Caco-2 (cell line): ENCODE measurements at regions of chr19 and their contacts with region 1.

Region 1: GRCh38 chr19:44212250-44212865 is at the start of gene ZNF227:
- DNase-seq: peak; percentile 93 to 95
- H3K4me3 ChIP-seq: peak within 1 kb of the TSS; percentile 64
- H3K4me3 Mint-ChIP-seq: peak within 1 kb of the TSS; percentile 85
- H3K27ac Mint-ChIP-seq: peak within 1 kb of the TSS; percentile 91
- H3K4me1 ChIP-seq: 0 out of 2 replicates have a peak, but pooled peaks cover 6% of the 10 kb centered on the region
- H3K4me1 Mint-ChIP-seq: peaks cover under 1% of the 10 kb centered on the region
- H3K27me3 ChIP-seq: no peaks in the 10 kb centered on the region
- H3K27me3 Mint-ChIP-seq: no peaks in the 10 kb centered on the region
- CTCF ChIP-seq: no peak
- total RNA-seq, gene ZNF227: 25.9 and 27.3 TPM in 2 replicates

Region 2: DNA sequence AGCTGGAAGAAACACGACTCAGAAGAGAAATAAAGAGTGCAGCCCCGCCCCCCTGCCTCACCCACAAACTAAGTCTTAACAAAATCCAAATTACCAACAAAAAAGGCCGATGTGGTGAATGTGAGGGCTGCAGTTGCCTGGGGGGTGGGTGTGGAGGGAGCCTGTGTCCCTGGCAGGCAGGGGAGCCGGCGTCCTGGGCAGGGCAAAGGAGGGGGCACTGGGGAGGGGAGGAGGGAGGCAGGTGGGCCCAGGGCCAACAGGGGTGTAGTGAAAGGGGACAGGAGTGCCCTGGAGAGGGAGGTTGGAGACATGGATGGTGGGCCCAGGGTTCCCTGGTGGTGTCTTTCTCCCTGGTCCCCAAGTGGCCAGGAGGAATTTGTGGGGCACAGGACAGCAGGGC is 492.4 kb before region 1 on chr19:
- CTCF ChIA-PET with region 1: no interaction called
- POLR2A ChIA-PET with region 1: interaction called, 10 read pairs
- intact Hi-C with region 1: no loop called
- DNase-seq: no peak
- H3K4me3 ChIP-seq: no peak overlapping the region
- H3K4me3 Mint-ChIP-seq: no peak overlapping the region
- H3K27ac Mint-ChIP-seq: no peak overlapping the region
- H3K4me1 ChIP-seq: no peaks in the 10 kb centered on the region
- H3K4me1 Mint-ChIP-seq: no peaks in the 10 kb centered on the region
- H3K27me3 ChIP-seq: no peaks in the 10 kb centered on the region
- H3K27me3 Mint-ChIP-seq: no peaks in the 10 kb centered on the region
- CTCF ChIP-seq: no peak

Region 3: DNA sequence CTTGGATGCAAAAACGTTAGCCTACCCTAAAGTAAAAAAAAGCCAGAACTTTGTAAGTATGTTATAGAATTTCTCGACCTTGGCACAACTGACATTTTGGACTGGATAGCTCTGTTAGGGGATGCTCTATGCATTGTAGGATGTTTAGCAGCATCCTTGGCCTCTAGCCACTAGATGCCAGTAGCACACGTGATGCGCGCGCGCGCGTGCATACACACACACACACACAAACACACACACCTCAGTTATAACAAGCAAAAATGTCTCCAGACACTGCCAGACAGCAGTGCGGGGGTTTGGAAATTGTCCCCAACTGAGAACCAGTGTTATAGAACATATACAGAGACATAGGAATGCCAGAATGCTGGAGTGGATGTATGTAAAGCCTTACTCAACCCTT is 30.2 kb before region 1 on chr19:
- CTCF ChIA-PET with region 1: no interaction called
- POLR2A ChIA-PET with region 1: no interaction called
- intact Hi-C with region 1: no loop called
- DNase-seq: peak in 1 of 2 experiments; percentile 8
- H3K4me3 ChIP-seq: no peak overlapping the region
- H3K4me3 Mint-ChIP-seq: no peak overlapping the region
- H3K27ac Mint-ChIP-seq: no peak overlapping the region
- H3K4me1 ChIP-seq: no peaks in the 10 kb centered on the region
- H3K4me1 Mint-ChIP-seq: no peaks in the 10 kb centered on the region
- H3K27me3 ChIP-seq: no peaks in the 10 kb centered on the region
- H3K27me3 Mint-ChIP-seq: peaks cover 6% of the 10 kb centered on the region
- CTCF ChIP-seq: no peak

Region 4: GRCh38 chr19:44258835-44259413 is 46.6 kb after region 1 on chr19:
- CTCF ChIA-PET with region 1: no interaction called
- POLR2A ChIA-PET with region 1: no interaction called
- intact Hi-C with region 1: loop called (anchors 1 kb)
- DNase-seq: no peak
- H3K4me3 ChIP-seq: peak overlapping the region; percentile 71; the same call in 1 of the 2 replicates
- H3K4me3 Mint-ChIP-seq: peak overlapping the region; percentile 88
- H3K27ac Mint-ChIP-seq: no peak overlapping the region
- H3K4me1 ChIP-seq: peaks cover 4% of the 10 kb centered on the region; the same call in 1 of the 2 replicates
- H3K4me1 Mint-ChIP-seq: peaks cover 18% of the 10 kb centered on the region
- H3K27me3 ChIP-seq: no peaks in the 10 kb centered on the region
- H3K27me3 Mint-ChIP-seq: no peaks in the 10 kb centered on the region
- CTCF ChIP-seq: no peak

Region 5: GRCh38 chr19:44304659-44305193 is 92.4 kb after region 1 on chr19 and contains the start of gene ZNF235:
- CTCF ChIA-PET with region 1: interaction called, 7 read pairs
- POLR2A ChIA-PET with region 1: no interaction called
- intact Hi-C with region 1: loop called (anchors 1 kb)
- DNase-seq: peak; percentile 90 to 93
- H3K4me3 ChIP-seq: peak within 1 kb of the TSS; percentile 75
- H3K4me3 Mint-ChIP-seq: peak within 1 kb of the TSS; percentile 84
- H3K27ac Mint-ChIP-seq: peak within 1 kb of the TSS; percentile 60
- H3K4me1 ChIP-seq: peaks cover 6% of the 10 kb centered on the region; the same call in 1 of the 2 replicates
- H3K4me1 Mint-ChIP-seq: no peaks in the 10 kb centered on the region
- H3K27me3 ChIP-seq: no peaks in the 10 kb centered on the region
- H3K27me3 Mint-ChIP-seq: no peaks in the 10 kb centered on the region
- CTCF ChIP-seq: no peak
- total RNA-seq, gene ZNF235: 9.2 and 9.5 TPM in 2 replicates

Region 6: GRCh38 chr19:44500148-44500956 is 288.0 kb after region 1 on chr19 and contains the start of gene ZNF180:
- CTCF ChIA-PET with region 1: interaction called, 5 read pairs
- POLR2A ChIA-PET with region 1: no interaction called
- intact Hi-C with region 1: loop called (anchors 1 kb)
- DNase-seq: peak; percentile 98 to 99
- H3K4me3 ChIP-seq: peak within 1 kb of the TSS; percentile 99
- H3K4me3 Mint-ChIP-seq: peak within 1 kb of the TSS; percentile 98
- H3K27ac Mint-ChIP-seq: peak within 1 kb of the TSS; percentile 92
- H3K4me1 ChIP-seq: peaks cover 8% of the 10 kb centered on the region; the same call in 1 of the 2 replicates
- H3K4me1 Mint-ChIP-seq: peaks cover 25% of the 10 kb centered on the region
- H3K27me3 ChIP-seq: no peaks in the 10 kb centered on the region
- H3K27me3 Mint-ChIP-seq: peaks cover 4% of the 10 kb centered on the region
- CTCF ChIP-seq: peak; percentile 38 to 83
- total RNA-seq, gene ZNF180: 9.1 and 13.3 TPM in 2 replicates